PC-9 (cell line): ENCODE measurements at regions of chr15 and their contacts with region 1.

Region 1: DNA sequence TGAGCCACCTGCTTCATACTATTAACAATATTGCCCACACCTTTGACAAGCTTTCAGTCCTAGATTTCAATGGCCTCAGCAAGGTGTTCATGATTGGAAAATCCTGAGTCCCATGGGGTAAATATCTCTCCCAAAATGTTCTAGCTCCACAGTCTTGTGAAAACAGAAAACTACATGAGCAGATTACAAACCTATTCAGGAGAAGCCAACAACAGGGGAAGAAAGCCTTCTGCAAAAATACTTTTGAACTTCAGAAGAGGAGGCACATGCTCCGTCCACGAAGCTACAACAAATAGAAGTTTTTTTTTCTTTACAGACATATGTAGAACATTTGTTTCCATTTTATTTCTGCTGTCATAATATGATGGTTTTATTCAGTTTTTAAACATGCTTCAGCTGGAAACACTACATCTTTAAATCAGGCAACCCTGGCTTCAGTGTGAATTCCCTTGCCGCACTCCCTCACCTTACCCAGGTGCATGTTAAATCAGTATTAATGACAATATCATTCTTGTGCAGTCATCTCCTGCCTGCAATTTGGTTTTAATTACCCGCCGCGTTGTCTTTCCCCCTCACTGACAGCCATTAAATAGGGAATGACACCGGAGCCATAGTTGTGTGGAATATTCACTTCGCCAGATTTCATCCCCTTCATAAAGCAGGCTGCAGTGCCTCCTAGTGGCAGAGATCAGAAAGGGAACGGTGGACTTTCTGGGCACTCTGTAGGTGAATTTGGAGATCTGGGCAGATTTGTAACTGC is 725.5 kb upstream of the ARRDC4 start:
- DNase-seq: peak in 1 of 2 experiments; percentile 24
- H3K4me3 ChIP-seq: no peak overlapping the region
- H3K27ac ChIP-seq: no peak overlapping the region
- H3K4me1 ChIP-seq: no peaks in the 10 kb centered on the region
- H3K27me3 ChIP-seq: 0 out of 2 replicates have a peak, but pooled peaks cover 4% of the 10 kb centered on the region
- CTCF ChIP-seq: peak; percentile 89

Region 2: DNA sequence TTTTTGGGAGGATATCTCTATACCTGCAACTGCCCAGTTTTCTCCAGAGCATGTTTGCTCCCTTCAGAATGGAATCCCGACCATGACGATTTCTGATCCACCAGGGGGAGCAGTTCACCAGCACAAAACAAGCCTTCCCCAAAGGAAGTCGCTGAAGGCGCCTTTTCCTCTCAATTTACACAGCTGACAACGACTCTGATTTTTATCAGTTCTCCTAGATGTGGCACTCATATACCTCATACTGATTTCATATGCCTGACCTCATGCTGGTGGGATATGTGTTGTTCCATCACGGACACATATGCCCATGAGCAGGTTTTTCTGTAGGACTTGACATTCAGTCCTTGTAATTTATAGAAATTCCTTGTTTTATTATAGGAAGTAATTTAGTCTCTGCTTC is 1975.5 kb before region 1 on chr15:
- CTCF ChIA-PET with region 1: no interaction called
- POLR2A ChIA-PET with region 1: no interaction called
- intact Hi-C with region 1: loop called (anchors 1 kb)
- DNase-seq: peak; percentile 49 to 51
- H3K4me3 ChIP-seq: no peak overlapping the region
- H3K27ac ChIP-seq: no peak overlapping the region
- H3K4me1 ChIP-seq: no peaks in the 10 kb centered on the region
- H3K27me3 ChIP-seq: no peaks in the 10 kb centered on the region
- CTCF ChIP-seq: peak; percentile 86

Region 3: GRCh38 chr15:97014001-97014400 is 221.0 kb before region 1 on chr15:
- CTCF ChIA-PET with region 1: no interaction called
- POLR2A ChIA-PET with region 1: no interaction called
- intact Hi-C with region 1: no loop called
- DNase-seq: no peak
- H3K4me3 ChIP-seq: no peak overlapping the region
- H3K27ac ChIP-seq: no peak overlapping the region
- H3K4me1 ChIP-seq: no peaks in the 10 kb centered on the region
- H3K27me3 ChIP-seq: no peaks in the 10 kb centered on the region
- CTCF ChIP-seq: no peak

Region 4: GRCh38 chr15:97248376-97248775 is 13.3 kb after region 1 on chr15:
- CTCF ChIA-PET with region 1: no interaction called
- POLR2A ChIA-PET with region 1: no interaction called
- intact Hi-C with region 1: no loop called
- DNase-seq: no peak
- H3K4me3 ChIP-seq: no peak overlapping the region
- H3K27ac ChIP-seq: no peak overlapping the region
- H3K4me1 ChIP-seq: no peaks in the 10 kb centered on the region
- H3K27me3 ChIP-seq: no peaks in the 10 kb centered on the region
- CTCF ChIP-seq: no peak